K562 (cell line): ENCODE measurements at regions of chr17 and their contacts with region 1.

Region 1: DNA sequence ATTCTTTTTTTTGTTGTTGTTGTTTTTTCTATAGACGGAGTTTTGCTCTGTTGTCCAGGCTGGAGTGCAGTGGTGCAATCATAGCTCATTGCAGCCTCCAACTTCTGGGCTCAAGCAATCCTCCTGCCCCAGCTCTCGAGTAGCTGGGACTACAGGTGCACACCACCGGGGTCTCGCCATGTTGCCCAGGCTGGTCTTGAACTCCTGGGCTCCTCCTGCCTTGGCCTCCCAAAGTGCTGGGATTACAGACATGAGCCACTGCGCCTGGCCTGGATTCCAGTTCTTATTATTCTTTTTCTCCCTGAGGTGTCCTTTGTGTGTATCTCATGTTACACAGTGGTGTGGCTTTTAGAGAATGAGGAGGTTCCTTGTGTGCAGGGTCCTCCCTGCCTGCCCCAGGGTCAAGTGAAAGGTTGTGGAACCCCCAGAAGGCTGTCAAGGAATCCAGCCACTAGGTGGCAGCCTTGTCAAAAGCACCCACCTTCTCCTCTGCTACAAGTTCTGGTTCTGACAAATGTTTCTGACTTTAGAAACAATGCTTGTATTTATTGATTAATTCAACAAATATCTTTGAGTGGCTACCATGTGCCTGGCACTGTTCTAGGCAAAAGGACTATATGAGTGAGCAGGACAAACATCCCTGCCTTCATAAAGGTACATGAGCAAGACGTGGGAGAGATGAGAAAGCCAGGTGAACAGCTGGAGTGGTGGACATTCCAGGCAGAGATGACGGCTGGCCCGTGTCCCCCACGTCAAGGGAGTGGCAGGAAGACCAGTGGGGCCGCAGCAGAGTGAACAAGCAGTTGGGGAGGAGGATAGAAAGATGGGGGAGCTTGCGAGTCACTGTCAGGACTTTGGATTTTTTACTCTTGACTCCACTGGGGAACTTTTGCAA is 112.4 kb downstream of the SPECC1 start:
- DNase-seq: peak; percentile 58 to 74 (median 60)
- ATAC-seq: peak; percentile 86
- H3K4me3 ChIP-seq: no peak overlapping the region
- H3K27ac ChIP-seq: no peak overlapping the region
- H3K4me1 ChIP-seq: no peaks in the 10 kb centered on the region
- H3K27me3 ChIP-seq: no peaks in the 10 kb centered on the region
- CTCF ChIP-seq: peak; percentile 82 to 84 (median 83)
- EP300 ChIP-seq: no peak
- POLR2A ChIP-seq: no peak
- RAD21 ChIP-seq: peak; percentile 73 to 88

Region 2: GRCh38 chr17:19992803-19993713 is 128.5 kb before region 1 on chr17:
- CTCF ChIA-PET with region 1: interaction called, 42 read pairs
- POLR2A ChIA-PET with region 1: no interaction called
- in situ Hi-C with region 1: no loop called
- intact Hi-C with region 1: loop called (anchors 1 kb)
- DNase-seq: peak; percentile 53 to 87 (median 56)
- ATAC-seq: peak; percentile 97
- H3K4me3 ChIP-seq: no peak overlapping the region
- H3K27ac ChIP-seq: no peak overlapping the region
- H3K4me1 ChIP-seq: peaks cover 6 to 8% of the 10 kb centered on the region in 2 experiments; a peak in 3 of 5 replicates
- H3K27me3 ChIP-seq: no peaks in the 10 kb centered on the region
- CTCF ChIP-seq: peak; percentile 67 to 97 (median 93)
- EP300 ChIP-seq: no peak
- POLR2A ChIP-seq: no peak
- RAD21 ChIP-seq: peak; percentile 60 to 88

Region 3: GRCh38 chr17:20133517-20133916 is 11.9 kb after region 1 on chr17:
- CTCF ChIA-PET with region 1: no interaction called
- POLR2A ChIA-PET with region 1: no interaction called
- in situ Hi-C with region 1: no loop called
- intact Hi-C with region 1: no loop called
- DNase-seq: no peak
- ATAC-seq: no peak
- H3K4me3 ChIP-seq: no peak overlapping the region
- H3K27ac ChIP-seq: no peak overlapping the region
- H3K4me1 ChIP-seq: no peaks in the 10 kb centered on the region
- H3K27me3 ChIP-seq: no peaks in the 10 kb centered on the region
- CTCF ChIP-seq: no peak
- EP300 ChIP-seq: no peak
- POLR2A ChIP-seq: no peak
- RAD21 ChIP-seq: no peak

Region 4: DNA sequence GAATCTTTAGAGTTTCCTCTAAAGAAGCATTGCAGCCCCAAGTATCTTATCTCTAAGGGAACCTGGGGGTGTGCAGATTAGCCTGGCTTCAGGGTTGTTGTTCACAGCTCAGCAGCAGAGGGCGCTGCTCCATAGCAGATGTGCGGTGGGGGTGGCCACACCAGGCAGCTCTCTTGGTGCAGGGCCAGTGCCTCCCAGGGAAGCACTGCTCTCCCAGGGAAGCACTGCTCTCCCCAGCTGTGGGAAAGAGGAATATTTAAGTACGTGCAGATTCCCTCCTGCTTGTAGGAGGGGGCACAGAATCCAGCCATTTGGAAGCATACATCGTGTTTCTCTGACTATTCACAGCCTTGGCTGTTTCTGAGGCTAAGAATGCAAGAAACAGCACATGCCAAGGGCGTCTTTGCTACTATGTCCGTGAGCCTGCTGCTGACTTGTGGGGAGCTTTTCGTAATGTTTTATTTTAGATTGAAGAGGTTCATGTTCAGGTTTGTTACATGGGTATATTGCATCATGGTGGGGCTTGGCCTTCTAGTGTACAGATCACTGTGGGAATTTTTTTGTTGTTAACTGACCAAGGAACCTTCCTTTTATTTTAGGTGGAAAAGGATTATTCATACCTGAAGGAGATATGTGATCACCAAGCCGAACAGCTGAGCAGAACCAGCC is 105.3 kb after region 1 on chr17:
- CTCF ChIA-PET with region 1: interaction called, 7 read pairs
- POLR2A ChIA-PET with region 1: no interaction called
- in situ Hi-C with region 1: no loop called
- intact Hi-C with region 1: loop called (anchors 2 kb)
- DNase-seq: peak; percentile 79 to 83 (median 80)
- ATAC-seq: peak; percentile 99
- H3K4me3 ChIP-seq: no peak overlapping the region
- H3K27ac ChIP-seq: no peak overlapping the region
- H3K4me1 ChIP-seq: peaks cover 0 to 6% of the 10 kb centered on the region in 2 experiments; a peak in 3 of 5 replicates
- H3K27me3 ChIP-seq: no peaks in the 10 kb centered on the region
- CTCF ChIP-seq: peak; percentile 83 to 90 (median 86)
- EP300 ChIP-seq: no peak
- POLR2A ChIP-seq: no peak
- RAD21 ChIP-seq: peak; percentile 75 to 90